ENCODE measurements at regions of chr6 and their contacts with region 1.

Region 1: DNA sequence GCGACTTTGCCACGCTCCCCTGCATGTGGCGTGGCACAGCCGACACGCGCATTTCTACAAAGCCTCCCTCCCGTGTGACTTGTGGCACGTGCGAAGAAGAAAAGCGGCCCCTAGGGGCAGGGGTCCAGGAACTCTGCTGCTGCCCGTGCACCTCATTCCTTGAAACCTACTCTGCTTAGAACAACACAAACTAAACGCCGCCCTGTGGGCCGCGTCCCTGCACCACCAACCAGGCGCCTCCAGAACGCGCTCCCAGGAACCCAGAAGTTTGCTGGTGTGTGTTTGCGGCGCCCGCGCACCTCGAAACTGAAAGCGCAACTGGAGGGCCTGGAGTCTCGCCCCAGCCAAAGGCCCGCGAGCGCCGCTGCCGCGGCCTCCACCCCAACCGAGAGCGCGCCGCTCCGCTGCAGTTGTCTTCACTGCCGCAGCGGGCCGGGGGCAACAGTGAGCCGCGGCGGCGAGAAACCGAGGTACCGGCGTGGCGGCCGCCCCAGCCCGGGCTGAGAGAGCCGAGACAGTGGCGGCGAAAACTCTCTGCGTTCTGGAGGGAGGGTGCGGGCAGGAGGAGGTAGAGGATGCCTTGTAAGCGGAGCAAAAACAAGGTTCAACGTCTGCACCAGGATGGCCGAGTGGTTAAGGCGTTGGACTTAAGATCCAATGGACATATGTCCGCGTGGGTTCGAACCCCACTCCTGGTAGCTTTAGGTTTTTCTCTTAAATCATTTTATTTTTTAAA is 65.8 kb downstream of the STX11 start:
- DNase-seq: peak; percentile 100
- H3K4me3 ChIP-seq: peak overlapping the region; percentile 35 to 56 (median 45)
- H3K27ac ChIP-seq: peak overlapping the region; percentile 17
- H3K4me1 ChIP-seq: peaks cover 14% of the 10 kb centered on the region
- H3K27me3 ChIP-seq: no peaks in the 10 kb centered on the region
- CTCF ChIP-seq: peak; percentile 81 to 85
- POLR2A ChIP-seq: peak; percentile 50

Region 2: GRCh38 chr6:144013486-144013909 is 202.6 kb before region 1 on chr6:
- CTCF ChIA-PET with region 1: no interaction called
- POLR2A ChIA-PET with region 1: no interaction called
- dilution Hi-C with region 1: no loop called
- intact Hi-C with region 1: loop called (anchors 2 kb)
- DNase-seq: peak; percentile 77
- H3K4me3 ChIP-seq: no peak overlapping the region
- H3K27ac ChIP-seq: no peak overlapping the region
- H3K4me1 ChIP-seq: no peaks in the 10 kb centered on the region
- H3K27me3 ChIP-seq: peaks cover 11 to 16% of the 10 kb centered on the region in 2 experiments
- CTCF ChIP-seq: peak; percentile 80 to 83
- POLR2A ChIP-seq: no peak

Region 3: DNA sequence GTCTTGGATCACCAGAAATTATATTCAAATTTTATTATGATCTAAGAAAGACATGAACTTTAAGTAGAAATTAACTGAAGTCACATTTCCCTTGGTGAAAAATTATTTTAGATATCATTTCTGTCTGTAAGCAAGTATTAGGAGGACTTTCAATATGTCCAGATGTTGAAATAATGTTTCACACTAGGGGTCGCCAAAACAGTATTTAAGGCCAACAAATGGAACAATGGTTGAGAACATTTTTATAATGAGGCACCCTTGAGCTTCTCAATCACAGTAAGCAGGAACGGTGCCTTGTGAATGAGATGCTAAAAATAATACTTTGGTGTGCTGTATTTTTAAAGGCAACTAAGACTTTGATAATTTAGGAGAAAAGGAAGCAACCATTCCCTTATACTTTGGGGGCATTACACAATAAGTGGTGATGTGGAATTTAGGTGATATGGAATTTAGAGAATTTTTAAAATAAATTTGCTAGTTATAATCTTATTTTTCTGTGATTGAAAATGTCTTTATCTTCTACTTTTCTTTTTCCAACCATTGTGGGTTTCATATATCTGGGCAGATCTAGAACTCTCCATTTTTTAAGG is 111.1 kb before region 1 on chr6:
- CTCF ChIA-PET with region 1: interaction called, 96 read pairs
- POLR2A ChIA-PET with region 1: interaction called, 3 read pairs
- dilution Hi-C with region 1: no loop called
- intact Hi-C with region 1: loop called (anchors 1 kb)
- DNase-seq: peak; percentile 84
- H3K4me3 ChIP-seq: no peak overlapping the region
- H3K27ac ChIP-seq: no peak overlapping the region
- H3K4me1 ChIP-seq: no peaks in the 10 kb centered on the region
- H3K27me3 ChIP-seq: peaks cover 0 to 3% of the 10 kb centered on the region in 2 experiments
- CTCF ChIP-seq: peak; percentile 40 to 45
- POLR2A ChIP-seq: no peak

Region 4: GRCh38 chr6:144190593-144190992 is 25.5 kb before region 1 on chr6:
- CTCF ChIA-PET with region 1: interaction called, 7 read pairs
- POLR2A ChIA-PET with region 1: no interaction called
- dilution Hi-C with region 1: no loop called
- intact Hi-C with region 1: loop called (anchors 1 kb)
- DNase-seq: peak; percentile 95
- H3K4me3 ChIP-seq: no peak overlapping the region
- H3K27ac ChIP-seq: no peak overlapping the region
- H3K4me1 ChIP-seq: peaks cover 14% of the 10 kb centered on the region
- H3K27me3 ChIP-seq: no peaks in the 10 kb centered on the region
- CTCF ChIP-seq: peak in 1 of 2 donors; percentile 5
- POLR2A ChIP-seq: peak; percentile 57

Region 5: DNA sequence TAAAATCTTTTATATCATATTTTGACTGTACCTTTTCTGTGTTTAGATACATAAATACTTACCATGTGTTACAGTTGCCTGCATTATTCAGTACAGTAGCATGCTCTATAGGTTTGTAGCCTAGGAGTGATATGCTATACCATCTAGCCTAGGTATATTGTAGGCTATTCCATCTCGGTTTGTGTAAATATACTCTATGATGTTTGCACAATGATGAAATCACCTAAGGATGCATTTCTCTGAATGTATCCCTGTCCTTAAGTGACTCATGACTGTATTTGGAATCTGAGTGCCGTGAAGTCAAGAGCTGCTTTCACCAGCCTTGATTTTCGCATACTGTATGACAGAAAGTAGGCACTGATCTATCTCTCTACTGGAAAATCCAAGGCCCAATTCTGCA is 198.9 kb after region 1 on chr6:
- CTCF ChIA-PET with region 1: no interaction called
- POLR2A ChIA-PET with region 1: no interaction called
- dilution Hi-C with region 1: no loop called
- intact Hi-C with region 1: loop called (anchors 1 kb)
- DNase-seq: peak; percentile 48
- H3K4me3 ChIP-seq: no peak overlapping the region
- H3K27ac ChIP-seq: peak overlapping the region; percentile 73
- H3K4me1 ChIP-seq: peaks cover 25% of the 10 kb centered on the region
- H3K27me3 ChIP-seq: no peaks in the 10 kb centered on the region
- CTCF ChIP-seq: no peak
- POLR2A ChIP-seq: no peak

Measured in endothelial cell of umbilical vein (primary cell).